ENCODE measurements at regions of chr13 and their contacts with region 1.

Region 1: DNA sequence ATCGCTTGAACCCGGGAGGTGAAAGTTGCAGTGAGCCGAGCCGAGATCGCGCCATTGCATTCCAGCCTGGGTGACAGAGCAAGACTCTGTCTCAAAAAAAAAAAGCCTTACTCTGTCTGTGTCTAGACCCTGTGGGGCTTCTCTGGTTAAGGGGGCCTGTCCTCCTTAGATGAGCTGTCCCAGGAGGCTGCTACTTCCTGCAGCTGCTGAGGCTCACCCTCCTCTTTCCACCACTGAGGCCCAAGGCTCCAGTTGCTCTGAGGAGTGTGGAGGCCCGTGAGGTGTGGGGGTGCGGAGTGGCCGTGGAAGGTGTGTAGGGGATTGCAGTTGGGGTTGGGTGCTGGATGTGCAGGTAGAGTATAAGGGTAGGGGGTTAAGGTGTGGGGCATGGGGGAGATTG is 22.1 kb upstream of the RASA3 start:
- DNase-seq: no peak
- H3K4me3 Mint-ChIP-seq: peak overlapping the region; percentile 62
- H3K27ac Mint-ChIP-seq: peak overlapping the region; percentile 85
- H3K4me1 Mint-ChIP-seq: peaks cover 76% of the 10 kb centered on the region
- H3K27me3 Mint-ChIP-seq: peaks cover under 1% of the 10 kb centered on the region

Region 2: DNA sequence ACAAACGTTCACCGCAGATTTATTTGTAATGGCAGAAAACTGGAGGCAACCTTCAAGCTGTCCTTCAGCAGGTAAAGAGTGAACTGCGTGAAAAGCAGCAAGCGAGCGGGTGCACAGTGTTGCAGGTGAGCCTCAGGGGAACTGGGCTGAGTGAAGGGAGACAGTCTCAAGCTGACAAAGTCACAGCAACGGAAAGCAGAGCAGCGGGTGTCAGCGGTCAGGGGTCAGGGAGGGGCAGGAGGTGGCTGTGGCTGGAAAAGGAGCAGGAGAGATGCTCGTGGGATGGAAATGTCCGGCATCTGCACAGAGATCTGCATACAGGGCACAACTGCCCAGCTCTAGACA is 13.6 kb before region 1 on chr13:
- intact Hi-C with region 1: loop called (anchors 2 kb)
- DNase-seq: peak; percentile 37
- H3K4me3 Mint-ChIP-seq: no peak overlapping the region
- H3K27ac Mint-ChIP-seq: no peak overlapping the region
- H3K4me1 Mint-ChIP-seq: peaks cover 14% of the 10 kb centered on the region
- H3K27me3 Mint-ChIP-seq: peaks cover 5% of the 10 kb centered on the region

Region 3: DNA sequence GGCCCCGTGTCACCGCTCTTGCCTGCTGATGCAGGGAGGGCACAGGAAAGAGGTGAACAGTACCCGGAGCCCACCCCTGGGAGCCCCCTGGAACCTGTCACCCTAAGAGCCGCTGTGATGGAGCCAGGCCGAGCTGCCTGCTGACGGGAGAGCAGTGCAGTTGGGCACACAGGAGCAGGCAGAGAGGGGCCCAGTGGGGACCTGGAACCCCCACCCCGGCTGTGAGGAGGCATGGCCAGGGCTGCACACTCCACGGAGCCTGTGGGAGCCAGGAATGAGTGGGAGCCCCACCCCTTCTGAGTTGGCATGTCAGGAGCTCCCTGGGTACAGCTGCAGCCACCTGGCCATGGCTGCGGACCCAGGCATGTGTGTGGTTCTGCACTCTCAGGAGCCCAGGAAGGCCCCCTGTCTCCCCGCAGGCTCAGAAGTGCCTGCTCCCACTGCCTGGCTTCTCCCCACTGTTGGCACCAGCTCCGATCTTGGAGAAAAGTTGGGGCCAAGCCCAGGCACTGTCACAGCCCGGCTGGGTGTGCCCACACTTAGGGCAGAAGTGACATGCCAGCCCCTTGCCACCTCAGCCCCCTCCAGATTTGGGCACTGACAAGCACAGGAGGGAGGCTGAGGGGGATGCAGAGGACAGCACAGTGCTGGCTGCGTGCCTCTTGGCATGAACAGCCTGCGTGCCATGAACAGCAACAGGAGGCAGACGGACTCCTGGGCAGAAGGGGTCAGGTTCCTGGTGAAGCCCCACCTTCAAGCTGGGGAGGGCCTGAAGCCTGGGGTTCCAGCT is 30.9 kb after region 1 on chr13:
- intact Hi-C with region 1: no loop called
- DNase-seq: no peak
- H3K4me3 Mint-ChIP-seq: no peak overlapping the region
- H3K27ac Mint-ChIP-seq: no peak overlapping the region
- H3K4me1 Mint-ChIP-seq: peaks cover 2% of the 10 kb centered on the region
- H3K27me3 Mint-ChIP-seq: peaks cover 15% of the 10 kb centered on the region